Endothelial cell of umbilical vein (primary cell): ENCODE measurements at regions of chr13 and their contacts with region 1.

Region 1: GRCh38 chr13:113029487-113030258 is 60.7 kb downstream of the MCF2L start:
- DNase-seq: peak; percentile 35
- H3K4me3 ChIP-seq: no peak overlapping the region
- H3K27ac ChIP-seq: no peak overlapping the region
- H3K4me1 ChIP-seq: no peaks in the 10 kb centered on the region
- H3K27me3 ChIP-seq: no peaks in the 10 kb centered on the region
- CTCF ChIP-seq: peak; percentile 81 to 91
- POLR2A ChIP-seq: no peak

Region 2: GRCh38 chr13:112638157-112638750 is 391.4 kb before region 1 on chr13:
- CTCF ChIA-PET with region 1: no interaction called
- POLR2A ChIA-PET with region 1: no interaction called
- dilution Hi-C with region 1: no loop called
- intact Hi-C with region 1: loop called (anchors 10 kb)
- DNase-seq: no peak
- H3K4me3 ChIP-seq: no peak overlapping the region
- H3K27ac ChIP-seq: no peak overlapping the region
- H3K4me1 ChIP-seq: peaks cover 4% of the 10 kb centered on the region
- H3K27me3 ChIP-seq: peaks cover 22 to 32% of the 10 kb centered on the region in 2 experiments
- CTCF ChIP-seq: no peak
- POLR2A ChIP-seq: no peak

Region 3: DNA sequence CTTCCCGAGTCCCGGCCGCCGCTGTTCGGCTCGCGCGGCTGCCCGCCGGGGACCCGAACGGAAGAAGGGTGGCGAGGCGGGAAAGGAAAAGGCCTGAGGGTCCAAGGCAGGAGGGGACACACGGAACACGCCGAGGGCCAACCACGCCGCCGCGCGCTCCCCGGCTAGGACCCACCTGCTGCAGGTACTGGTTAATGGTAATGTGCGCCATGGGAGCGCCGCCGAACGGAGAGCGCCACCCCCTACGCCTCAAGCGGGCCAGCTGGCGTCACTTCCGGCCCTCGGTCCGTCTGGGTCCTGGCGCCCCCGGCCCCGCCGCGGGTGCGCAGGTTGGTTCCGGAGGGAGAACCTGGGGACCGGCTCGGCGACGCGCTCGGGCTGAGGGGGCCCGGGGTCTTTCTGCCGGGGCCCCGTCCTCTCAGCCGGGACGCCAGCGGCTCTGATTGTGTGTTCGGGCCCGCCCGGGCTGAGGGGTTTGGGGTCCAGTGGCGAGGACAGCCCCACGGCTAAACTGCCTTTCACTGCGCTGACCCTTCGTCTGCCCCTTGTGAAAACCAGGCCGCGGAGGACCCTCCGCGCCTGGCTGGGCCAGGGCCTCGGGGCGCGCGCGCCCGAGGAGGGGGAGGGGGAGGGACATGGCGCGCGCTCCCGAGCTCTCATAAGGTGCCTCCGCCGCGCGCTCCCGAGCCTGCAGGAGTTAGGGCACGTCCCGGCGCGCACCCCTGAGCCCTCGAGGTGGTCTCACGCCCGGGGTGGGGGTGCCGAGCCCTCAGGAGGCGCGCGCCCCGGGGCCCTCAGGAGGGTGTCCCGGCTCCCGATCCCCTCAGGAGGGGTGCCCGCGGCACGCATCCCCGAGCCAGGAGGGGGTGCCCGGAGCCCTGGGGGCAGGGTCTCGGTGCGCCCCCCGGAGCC is 179.0 kb after region 1 on chr13 and contains the start of gene PCID2:
- CTCF ChIA-PET with region 1: interaction called, 3 read pairs
- POLR2A ChIA-PET with region 1: no interaction called
- dilution Hi-C with region 1: no loop called
- intact Hi-C with region 1: loop called (anchors 2 kb)
- DNase-seq: peak; percentile 85
- H3K4me3 ChIP-seq: peak within 1 kb of the TSS; percentile 73 to 92 (median 91)
- H3K27ac ChIP-seq: peak within 1 kb of the TSS; percentile 98
- H3K4me1 ChIP-seq: peaks cover 19% of the 10 kb centered on the region
- H3K27me3 ChIP-seq: no peaks in the 10 kb centered on the region
- CTCF ChIP-seq: no peak
- POLR2A ChIP-seq: peak; percentile 78
- total RNA-seq, gene PCID2: 48.5 and 55.6 TPM in 2 replicates

Region 4: DNA sequence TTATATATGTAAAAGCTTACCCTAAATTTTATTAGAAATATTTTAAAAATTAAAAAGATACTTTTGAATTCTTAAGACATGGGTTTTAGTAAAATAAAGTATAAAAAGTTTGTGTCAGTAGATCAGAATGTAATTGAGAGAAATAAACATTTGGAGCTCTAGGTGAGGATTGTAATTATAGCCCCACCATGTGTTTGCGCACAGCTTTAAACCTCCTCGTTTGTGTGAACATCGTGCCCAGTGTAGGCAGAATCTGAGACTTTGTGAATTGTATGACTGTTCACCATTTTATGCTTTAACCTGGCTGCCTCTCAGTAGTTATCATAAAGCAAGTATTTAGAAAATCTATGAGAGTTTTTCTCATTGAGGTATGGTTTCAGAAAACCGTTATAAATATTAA is 208.9 kb after region 1 on chr13:
- CTCF ChIA-PET with region 1: interaction called, 17 read pairs
- POLR2A ChIA-PET with region 1: no interaction called
- dilution Hi-C with region 1: no loop called
- intact Hi-C with region 1: no loop called
- DNase-seq: no peak
- H3K4me3 ChIP-seq: no peak overlapping the region
- H3K27ac ChIP-seq: no peak overlapping the region
- H3K4me1 ChIP-seq: no peaks in the 10 kb centered on the region
- H3K27me3 ChIP-seq: no peaks in the 10 kb centered on the region
- CTCF ChIP-seq: peak in 1 of 2 donors; percentile 7
- POLR2A ChIP-seq: no peak

Region 5: DNA sequence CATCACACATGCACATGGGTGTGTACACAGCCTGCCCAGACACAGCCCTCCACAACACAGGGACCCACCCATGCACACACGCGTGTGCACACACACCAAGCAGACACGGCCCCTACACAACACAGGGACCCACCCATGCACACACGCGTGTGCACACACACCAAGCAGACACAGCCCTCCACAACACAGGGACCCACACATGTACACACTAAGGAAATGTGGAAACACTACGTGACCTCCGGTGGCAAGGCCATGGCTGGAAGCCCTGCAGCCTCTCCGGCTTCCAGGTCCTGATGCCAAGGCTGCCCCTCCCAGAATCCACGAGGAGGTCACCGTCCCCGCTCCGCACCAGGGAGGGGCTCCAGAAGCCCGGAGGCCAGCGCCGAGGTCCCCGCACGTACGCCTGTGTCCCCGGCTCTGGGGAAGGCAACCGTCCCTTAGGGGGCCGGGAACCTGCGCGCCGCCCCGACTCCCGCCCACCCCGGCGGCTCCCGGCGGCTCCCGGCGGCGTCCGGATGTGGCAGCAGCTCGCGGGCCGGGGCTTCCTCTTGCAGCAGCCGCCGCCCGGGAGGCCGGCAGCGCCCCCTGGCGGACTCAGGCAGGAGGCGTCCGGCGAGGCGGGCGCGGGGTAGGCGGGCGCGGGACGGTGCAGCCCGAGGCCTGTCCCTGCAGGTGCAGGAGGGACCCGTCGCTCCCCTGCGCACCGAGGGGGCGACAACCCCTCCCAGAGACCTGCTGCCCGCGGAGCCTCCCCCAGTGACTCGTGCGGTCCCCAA is 364.1 kb after region 1 on chr13:
- CTCF ChIA-PET with region 1: interaction called, 16 read pairs
- POLR2A ChIA-PET with region 1: no interaction called
- dilution Hi-C with region 1: no loop called
- intact Hi-C with region 1: no loop called
- DNase-seq: peak; percentile 61
- H3K4me3 ChIP-seq: peak overlapping the region; percentile 36 to 91 (median 60)
- H3K27ac ChIP-seq: no peak overlapping the region
- H3K4me1 ChIP-seq: peaks cover 3% of the 10 kb centered on the region
- H3K27me3 ChIP-seq: no peaks in the 10 kb centered on the region
- CTCF ChIP-seq: peak; percentile 69 to 71
- POLR2A ChIP-seq: no peak